ENCODE measurements at regions of chr2 and their contacts with region 1.

Region 1: GRCh38 chr2:85327822-85328617 is at the start of gene TGOLN2:
- DNase-seq: peak; percentile 95
- H3K4me3 Mint-ChIP-seq: peak within 1 kb of the TSS; percentile 93
- H3K27ac Mint-ChIP-seq: peak within 1 kb of the TSS; percentile 100
- H3K4me1 Mint-ChIP-seq: peaks cover 48% of the 10 kb centered on the region
- H3K27me3 Mint-ChIP-seq: no peaks in the 10 kb centered on the region
- total RNA-seq, gene TGOLN2: 129 to 131 TPM

Region 2: GRCh38 chr2:84905181-84906107 is 422.6 kb before region 1 on chr2 and contains the start of gene TMSB10:
- CTCF ChIA-PET with region 1: interaction called, 5 read pairs
- POLR2A ChIA-PET with region 1: interaction called, 11 read pairs
- DNase-seq: peak; percentile 91
- H3K4me3 Mint-ChIP-seq: peak within 1 kb of the TSS; percentile 89
- H3K27ac Mint-ChIP-seq: peak within 1 kb of the TSS; percentile 94
- H3K4me1 Mint-ChIP-seq: peaks cover 67% of the 10 kb centered on the region
- H3K27me3 Mint-ChIP-seq: no peaks in the 10 kb centered on the region
- total RNA-seq, gene TMSB10: 5,686 to 5,768 TPM

Region 3: GRCh38 chr2:85302121-85302520 is 25.9 kb before region 1 on chr2:
- CTCF ChIA-PET with region 1: interaction called, 14 read pairs
- POLR2A ChIA-PET with region 1: interaction called, 11 read pairs
- DNase-seq: no peak
- H3K4me3 Mint-ChIP-seq: no peak overlapping the region
- H3K27ac Mint-ChIP-seq: no peak overlapping the region
- H3K4me1 Mint-ChIP-seq: peaks cover 5% of the 10 kb centered on the region
- H3K27me3 Mint-ChIP-seq: peaks cover 12% of the 10 kb centered on the region

Region 4: DNA sequence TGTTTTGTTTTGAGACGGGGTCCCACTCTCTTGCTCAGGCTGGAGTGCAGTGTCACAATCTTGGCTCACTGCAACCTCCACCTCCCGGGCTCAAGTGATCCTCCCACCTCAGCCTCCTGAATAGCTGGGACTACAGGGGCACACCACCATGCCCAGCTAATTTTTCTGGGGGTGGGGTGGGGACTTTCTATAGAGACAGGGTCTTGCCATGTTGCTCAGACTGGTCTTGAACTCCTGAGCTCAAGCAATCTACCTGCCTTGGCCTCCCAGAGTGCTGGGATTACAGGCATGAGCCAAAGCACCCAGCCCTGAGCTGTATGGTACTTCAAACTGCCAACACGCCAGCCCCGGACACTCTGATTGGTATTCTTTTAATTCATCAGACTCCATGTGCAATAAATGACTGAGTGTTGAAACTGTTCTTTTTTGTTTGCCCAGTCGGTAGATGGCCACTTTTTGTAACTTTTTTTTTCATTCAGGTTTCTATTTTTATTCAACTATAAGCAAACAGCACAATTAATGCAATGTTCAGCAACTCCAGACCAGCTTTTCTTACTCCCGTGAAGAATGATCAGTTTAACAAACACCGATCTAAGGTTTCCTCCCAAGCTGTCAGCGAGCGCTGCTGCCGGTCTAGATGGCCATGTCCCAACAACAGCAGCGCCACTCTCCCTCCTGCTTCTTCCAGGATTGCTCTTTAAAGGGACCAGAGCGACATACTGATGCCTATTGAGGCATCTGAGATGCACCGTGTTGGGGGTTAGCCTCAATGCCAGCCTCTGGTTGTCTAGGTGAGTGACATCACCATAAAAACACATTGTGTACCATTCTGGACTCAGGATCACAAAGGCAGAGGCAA is 12.2 kb after region 1 on chr2:
- CTCF ChIA-PET with region 1: no interaction called
- POLR2A ChIA-PET with region 1: interaction called, 234 read pairs
- DNase-seq: no peak
- H3K4me3 Mint-ChIP-seq: no peak overlapping the region
- H3K27ac Mint-ChIP-seq: no peak overlapping the region
- H3K4me1 Mint-ChIP-seq: no peaks in the 10 kb centered on the region
- H3K27me3 Mint-ChIP-seq: peaks cover 12% of the 10 kb centered on the region

Region 5: GRCh38 chr2:85409845-85410583 is 82.0 kb after region 1 on chr2 and contains the start of gene CAPG:
- CTCF ChIA-PET with region 1: no interaction called
- POLR2A ChIA-PET with region 1: interaction called, 17 read pairs
- DNase-seq: peak; percentile 72
- H3K4me3 Mint-ChIP-seq: peak within 1 kb of the TSS; percentile 78
- H3K27ac Mint-ChIP-seq: peak within 1 kb of the TSS; percentile 73
- H3K4me1 Mint-ChIP-seq: peaks cover 76% of the 10 kb centered on the region
- H3K27me3 Mint-ChIP-seq: peaks cover 3% of the 10 kb centered on the region
- total RNA-seq, gene CAPG: 167 to 177 TPM

Region 6: DNA sequence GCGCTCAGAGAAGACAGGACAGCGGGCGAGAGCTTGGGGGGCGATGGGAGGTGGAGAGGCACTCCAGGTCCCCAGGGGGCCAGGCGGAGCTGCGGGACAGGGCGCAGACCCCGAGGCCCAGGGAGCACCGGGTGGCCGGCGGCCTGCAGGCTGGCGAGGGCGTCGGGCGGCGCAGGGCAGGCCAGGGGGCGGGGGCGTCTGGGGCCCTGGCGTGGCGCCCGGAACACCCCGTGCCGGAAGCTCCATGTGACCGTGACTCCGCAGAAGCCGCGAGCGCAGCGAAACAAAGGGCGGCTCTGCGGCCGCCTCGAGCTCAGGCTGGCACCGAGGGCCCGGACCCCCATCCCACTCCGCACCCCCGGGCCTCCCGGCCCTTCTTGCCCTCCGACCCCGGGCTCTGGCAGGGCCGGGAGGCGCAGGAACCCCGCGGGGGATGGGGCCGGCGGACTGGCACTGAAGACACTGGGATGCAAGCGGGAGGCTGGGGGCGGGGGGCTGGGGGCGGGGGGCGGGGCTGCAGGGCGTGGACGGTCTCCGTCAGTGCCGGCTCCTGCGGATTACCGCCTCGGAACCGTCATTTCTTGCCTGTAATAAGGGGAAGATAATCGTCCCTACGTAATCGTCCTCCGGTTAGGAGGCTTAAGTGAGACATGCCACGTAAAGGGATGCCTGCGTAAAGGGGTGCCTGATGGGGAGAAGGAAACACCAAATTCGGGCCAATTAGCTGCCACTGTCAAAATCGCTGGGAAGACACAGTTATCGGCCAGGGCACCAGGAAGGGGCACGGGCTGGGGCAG is 109.7 kb after region 1 on chr2:
- CTCF ChIA-PET with region 1: no interaction called
- POLR2A ChIA-PET with region 1: interaction called, 14 read pairs
- DNase-seq: peak; percentile 81
- H3K4me3 Mint-ChIP-seq: peak overlapping the region; percentile 77
- H3K27ac Mint-ChIP-seq: peak overlapping the region; percentile 89
- H3K4me1 Mint-ChIP-seq: peaks cover 40% of the 10 kb centered on the region
- H3K27me3 Mint-ChIP-seq: no peaks in the 10 kb centered on the region

Region 7: DNA sequence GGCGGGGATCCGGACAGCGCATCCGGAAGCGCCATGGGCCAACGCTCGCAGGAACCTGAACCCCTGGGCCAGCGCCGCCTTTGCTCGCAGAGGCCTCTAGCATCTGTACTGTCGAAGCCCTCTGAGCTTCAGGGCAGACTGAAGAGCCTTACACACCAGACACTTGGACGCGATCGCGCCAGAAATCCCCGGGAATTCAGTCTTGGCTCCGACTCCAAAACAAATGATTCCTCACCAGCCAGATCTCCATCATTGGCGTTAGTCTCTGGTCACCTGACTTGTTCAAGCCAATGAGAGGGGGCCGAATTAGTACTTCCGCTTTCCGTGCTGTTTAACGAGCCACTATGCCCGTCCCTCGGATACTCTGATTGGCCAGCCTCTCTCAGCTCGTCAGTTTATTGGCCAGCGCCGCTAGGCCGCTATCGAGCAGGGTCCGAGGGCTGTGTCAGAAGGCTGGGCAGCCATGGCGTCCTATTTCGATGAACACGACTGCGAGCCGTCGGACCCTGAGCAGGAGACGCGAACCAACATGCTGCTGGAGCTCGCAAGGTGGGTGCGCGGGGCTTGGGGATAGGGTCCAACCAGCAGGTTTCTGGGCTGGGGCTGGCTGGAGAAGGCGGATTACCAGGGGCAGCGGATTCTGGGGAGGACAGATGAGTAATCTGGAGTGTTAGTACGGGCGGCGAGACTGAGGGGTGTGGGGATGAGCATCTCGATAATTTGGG is 267.4 kb after region 1 on chr2 and contains the start of gene RNF181:
- CTCF ChIA-PET with region 1: no interaction called
- POLR2A ChIA-PET with region 1: interaction called, 18 read pairs
- DNase-seq: peak; percentile 94
- H3K4me3 Mint-ChIP-seq: peak within 1 kb of the TSS; percentile 96
- H3K27ac Mint-ChIP-seq: peak within 1 kb of the TSS; percentile 90
- H3K4me1 Mint-ChIP-seq: peaks cover 32% of the 10 kb centered on the region
- H3K27me3 Mint-ChIP-seq: no peaks in the 10 kb centered on the region
- total RNA-seq, gene RNF181: 117 to 121 TPM

Region 8: DNA sequence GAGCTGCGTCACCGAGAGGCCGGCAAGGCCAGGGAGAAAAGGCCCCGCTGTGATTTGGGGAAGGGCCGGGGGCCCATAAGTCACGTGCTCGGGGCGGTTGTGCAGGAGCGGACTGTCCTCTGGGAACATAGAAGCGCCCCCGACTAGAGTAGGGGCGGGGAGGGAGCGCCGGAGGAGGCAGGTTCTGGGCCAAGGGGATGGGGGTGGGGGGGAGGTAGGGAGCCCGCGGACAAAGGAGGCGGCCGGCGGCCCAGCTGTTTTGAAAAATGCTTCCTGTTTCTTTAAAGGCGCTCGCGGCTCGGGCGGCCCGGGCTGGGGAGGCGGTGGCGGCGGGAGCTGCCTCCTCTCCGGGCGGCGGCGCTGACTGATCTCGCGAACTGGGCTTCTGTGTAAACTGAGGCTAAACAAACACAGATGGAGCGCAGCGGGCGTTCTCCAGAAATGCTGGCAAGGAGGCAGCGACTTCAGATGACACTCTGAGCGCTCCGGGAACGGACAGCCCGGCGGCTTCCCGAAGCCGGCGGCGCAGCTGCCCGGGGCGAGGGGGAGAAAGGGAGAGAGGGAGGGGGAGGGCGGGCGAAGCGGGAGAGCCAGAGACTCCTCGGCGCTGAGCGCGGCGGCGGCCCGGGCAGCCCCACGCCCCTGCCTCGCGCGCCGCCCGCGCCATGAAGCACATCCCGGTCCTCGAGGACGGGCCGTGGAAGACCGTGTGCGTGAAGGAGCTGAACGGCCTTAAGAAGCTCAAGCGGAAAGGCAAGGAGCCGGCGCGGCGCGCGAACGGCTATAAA is 425.7 kb after region 1 on chr2 and contains the start of gene ATOH8:
- CTCF ChIA-PET with region 1: no interaction called
- POLR2A ChIA-PET with region 1: no interaction called
- DNase-seq: peak; percentile 54
- H3K4me3 Mint-ChIP-seq: peak within 1 kb of the TSS; percentile 74
- H3K27ac Mint-ChIP-seq: no peak within 1 kb of the TSS
- H3K4me1 Mint-ChIP-seq: peaks cover 20% of the 10 kb centered on the region
- H3K27me3 Mint-ChIP-seq: peaks cover 78% of the 10 kb centered on the region
- total RNA-seq, gene ATOH8: 0.55 to 0.78 TPM

Measured in activated CD4-positive, alpha-beta memory T cell treated with anti-CD3 and anti-CD28 coated beads, Interleukin-2, amount 10 ng/mL, durations not matched to agents 7 days and 5 days (primary cell).